ENCODE measurements at regions of chr2 and their contacts with region 1.

Region 1: DNA sequence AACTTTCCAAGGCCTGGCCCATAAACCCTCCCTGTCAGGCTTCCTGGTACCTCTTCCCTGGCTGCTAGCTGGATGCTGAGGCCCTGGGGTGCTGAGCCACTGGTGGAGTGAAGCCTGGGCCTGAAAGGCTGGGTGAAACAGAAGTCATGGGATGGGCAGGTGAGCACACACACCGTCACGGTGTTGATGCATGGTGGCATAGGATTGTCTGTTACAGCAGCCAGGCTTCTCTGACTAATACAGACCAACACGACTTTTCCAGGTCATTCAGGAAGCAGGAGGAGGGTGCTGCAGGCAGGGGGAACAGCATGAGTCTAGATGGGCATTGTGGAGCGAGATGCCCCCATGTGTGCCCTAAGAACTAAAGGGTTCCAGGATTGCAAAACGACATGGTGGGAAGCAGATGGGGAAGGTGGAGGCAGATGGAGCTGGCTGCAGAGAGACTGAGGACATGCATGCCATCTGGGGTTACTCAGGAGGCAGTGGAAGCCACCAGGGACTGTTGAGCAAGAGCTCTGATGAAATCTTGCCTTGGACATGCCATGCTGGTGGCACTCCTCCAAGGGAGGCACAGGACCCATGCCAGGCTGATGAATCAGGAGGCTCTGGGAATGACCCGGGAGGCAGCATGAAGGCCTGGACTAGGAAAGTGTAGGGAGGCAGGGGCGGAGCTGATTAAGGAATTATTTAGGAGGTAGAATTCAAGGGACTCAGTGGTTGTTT is 480.9 kb downstream of the TSN start:
- DNase-seq: peak; percentile 86
- H3K4me3 ChIP-seq: no peak overlapping the region
- H3K27ac ChIP-seq: peak overlapping the region; percentile 25
- H3K4me1 ChIP-seq: peaks cover 21% of the 10 kb centered on the region
- H3K27me3 ChIP-seq: no peaks in the 10 kb centered on the region
- CTCF ChIP-seq: no peak

Region 2: DNA sequence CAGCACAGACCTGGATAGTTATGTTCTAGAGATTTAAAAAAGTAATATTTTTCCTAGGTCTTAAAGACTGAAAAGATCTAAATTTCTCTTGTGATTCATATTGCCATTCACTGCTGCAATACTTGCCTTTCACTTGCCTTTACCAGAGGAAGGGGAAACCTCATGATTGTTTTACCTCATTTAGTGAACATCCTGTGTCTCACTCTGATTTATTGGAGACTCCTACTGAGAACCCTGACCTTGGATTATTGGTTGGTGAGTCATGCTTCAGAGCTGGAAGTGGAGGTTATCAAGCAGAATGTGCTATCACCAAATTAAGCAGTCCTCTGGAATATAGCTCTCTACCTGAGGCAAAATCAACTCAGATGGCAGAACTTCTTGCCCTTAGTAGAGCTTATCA is 19.6 kb after region 1 on chr2:
- CTCF ChIA-PET with region 1: no interaction called
- dilution Hi-C with region 1: no loop called
- in situ Hi-C with region 1: no loop called
- intact Hi-C with region 1: loop called (anchors 1 kb)
- DNase-seq: peak; percentile 61
- H3K4me3 ChIP-seq: no peak overlapping the region
- H3K27ac ChIP-seq: no peak overlapping the region
- H3K4me1 ChIP-seq: peaks cover 9% of the 10 kb centered on the region
- H3K27me3 ChIP-seq: no peaks in the 10 kb centered on the region
- CTCF ChIP-seq: no peak

Measured in mammary epithelial cell (primary cell).